Activated T-helper 1 cell treated with anti-CD3 and anti-CD28 coated beads, Interleukin-12 subunit alpha, Interleukin-12 subunit beta, Interleukin-2, Interleukin-4 antibody, amounts not matched to agents 30 ng/mL and 10 ng/mL and 1 ng/mL, durations not matched to agents 14 hours and 24 hours and 36 hours (primary cell): ENCODE measurements at regions of chr22 and their contacts with region 1.

Region 1: GRCh38 chr22:39943337-39943736 is 16.9 kb upstream of the TMA7B start:
- DNase-seq: no peak
- H3K4me3 Mint-ChIP-seq: peak overlapping the region; percentile 42
- H3K27ac Mint-ChIP-seq: peak overlapping the region; percentile 82
- H3K4me1 Mint-ChIP-seq: peaks cover 76% of the 10 kb centered on the region
- H3K27me3 Mint-ChIP-seq: no peaks in the 10 kb centered on the region

Region 2: DNA sequence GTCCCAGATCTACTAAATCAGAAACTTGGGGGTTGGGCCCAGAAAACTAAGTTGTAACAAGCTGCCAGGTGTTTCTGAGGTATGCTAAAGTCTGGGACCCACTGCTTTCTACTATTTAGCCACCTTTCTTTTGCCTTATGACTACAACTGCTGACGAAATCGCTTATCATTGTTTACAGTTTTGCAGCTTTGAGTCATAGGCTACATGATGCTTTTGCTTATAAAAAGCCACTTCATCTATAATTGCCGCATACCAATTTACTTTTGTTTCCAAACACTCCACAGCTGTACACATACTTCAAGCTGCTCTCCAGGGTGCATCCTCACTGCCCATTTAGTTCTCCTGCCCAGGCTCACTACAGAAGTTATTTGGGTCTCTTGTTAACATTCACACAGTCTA is 194.5 kb before region 1 on chr22:
- intact Hi-C with region 1: loop called (anchors 5 kb)
- DNase-seq: no peak
- H3K4me3 Mint-ChIP-seq: no peak overlapping the region
- H3K27ac Mint-ChIP-seq: no peak overlapping the region
- H3K4me1 Mint-ChIP-seq: peaks cover 50% of the 10 kb centered on the region
- H3K27me3 Mint-ChIP-seq: peaks cover 2% of the 10 kb centered on the region

Region 3: DNA sequence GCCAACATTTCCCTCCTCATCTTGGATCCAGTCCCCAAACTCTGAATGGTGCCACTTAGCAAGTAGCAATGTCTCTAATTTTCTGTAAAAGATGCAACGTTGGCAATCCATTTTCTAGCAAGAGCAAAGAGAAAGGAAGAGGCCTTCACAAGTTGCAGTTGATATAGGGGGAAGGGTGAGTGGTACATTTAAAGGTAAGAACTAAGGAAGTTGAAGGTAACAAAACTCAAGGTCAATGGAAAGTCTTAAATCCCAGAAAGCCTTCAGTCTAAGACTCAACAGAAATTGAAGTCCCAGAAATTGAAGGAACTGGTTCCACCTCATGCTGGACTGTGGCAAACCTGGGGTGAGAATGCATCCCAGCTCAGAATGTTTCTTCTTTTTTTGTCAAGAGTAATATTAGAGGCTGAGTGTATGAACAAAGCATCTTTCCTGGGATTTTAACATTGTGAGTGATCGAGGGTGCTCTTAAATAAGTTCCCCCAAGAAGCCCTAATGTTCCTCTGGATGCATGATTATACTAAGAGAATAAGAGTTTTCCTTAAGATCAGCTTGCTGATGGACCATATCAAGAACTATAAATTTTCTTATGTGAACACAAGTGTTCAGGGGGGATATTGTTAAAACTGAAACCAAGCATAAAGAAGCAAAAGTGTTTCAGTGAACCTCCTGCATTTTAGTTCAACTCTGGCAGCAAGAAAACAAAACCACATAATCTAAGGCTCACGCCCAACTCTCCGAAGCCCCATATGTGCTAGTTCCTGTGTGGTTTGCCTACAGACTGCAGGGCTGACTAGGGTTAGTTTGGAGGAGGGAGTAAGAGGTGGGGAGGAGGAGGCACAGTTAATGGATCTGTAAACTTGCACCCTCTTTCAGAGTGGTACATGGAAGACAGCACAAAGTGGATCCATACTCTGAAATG is 42.8 kb before region 1 on chr22 and contains the start of gene GRAP2:
- intact Hi-C with region 1: no loop called
- DNase-seq: peak; percentile 77
- H3K4me3 Mint-ChIP-seq: peak within 1 kb of the TSS; percentile 93
- H3K27ac Mint-ChIP-seq: peak within 1 kb of the TSS; percentile 95
- H3K4me1 Mint-ChIP-seq: peaks cover 47% of the 10 kb centered on the region
- H3K27me3 Mint-ChIP-seq: no peaks in the 10 kb centered on the region
- total RNA-seq, gene GRAP2: 30.5 and 31.3 TPM in 2 replicates

Region 4: DNA sequence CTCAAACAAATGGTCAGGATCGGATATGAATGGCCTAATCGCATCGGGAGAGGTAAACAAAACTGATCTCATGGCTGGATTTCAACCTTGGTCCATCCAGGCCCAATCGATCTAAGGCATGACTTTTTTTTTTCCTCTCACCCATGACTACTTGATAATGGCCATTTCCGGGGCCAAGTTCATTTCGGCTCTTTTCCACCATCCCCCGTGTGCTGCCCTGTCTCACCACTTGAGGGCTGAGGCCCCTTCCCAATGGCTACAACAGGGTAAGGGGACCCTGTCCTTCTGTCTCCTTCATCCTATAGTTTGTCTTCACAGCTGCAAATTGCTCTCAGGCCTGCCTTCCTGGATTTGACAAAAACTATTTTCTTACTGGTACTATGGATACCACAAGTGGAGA is 15.8 kb before region 1 on chr22:
- intact Hi-C with region 1: loop called (anchors 1 kb)
- DNase-seq: no peak
- H3K4me3 Mint-ChIP-seq: no peak overlapping the region
- H3K27ac Mint-ChIP-seq: no peak overlapping the region
- H3K4me1 Mint-ChIP-seq: peaks cover 37% of the 10 kb centered on the region
- H3K27me3 Mint-ChIP-seq: no peaks in the 10 kb centered on the region

Region 5: DNA sequence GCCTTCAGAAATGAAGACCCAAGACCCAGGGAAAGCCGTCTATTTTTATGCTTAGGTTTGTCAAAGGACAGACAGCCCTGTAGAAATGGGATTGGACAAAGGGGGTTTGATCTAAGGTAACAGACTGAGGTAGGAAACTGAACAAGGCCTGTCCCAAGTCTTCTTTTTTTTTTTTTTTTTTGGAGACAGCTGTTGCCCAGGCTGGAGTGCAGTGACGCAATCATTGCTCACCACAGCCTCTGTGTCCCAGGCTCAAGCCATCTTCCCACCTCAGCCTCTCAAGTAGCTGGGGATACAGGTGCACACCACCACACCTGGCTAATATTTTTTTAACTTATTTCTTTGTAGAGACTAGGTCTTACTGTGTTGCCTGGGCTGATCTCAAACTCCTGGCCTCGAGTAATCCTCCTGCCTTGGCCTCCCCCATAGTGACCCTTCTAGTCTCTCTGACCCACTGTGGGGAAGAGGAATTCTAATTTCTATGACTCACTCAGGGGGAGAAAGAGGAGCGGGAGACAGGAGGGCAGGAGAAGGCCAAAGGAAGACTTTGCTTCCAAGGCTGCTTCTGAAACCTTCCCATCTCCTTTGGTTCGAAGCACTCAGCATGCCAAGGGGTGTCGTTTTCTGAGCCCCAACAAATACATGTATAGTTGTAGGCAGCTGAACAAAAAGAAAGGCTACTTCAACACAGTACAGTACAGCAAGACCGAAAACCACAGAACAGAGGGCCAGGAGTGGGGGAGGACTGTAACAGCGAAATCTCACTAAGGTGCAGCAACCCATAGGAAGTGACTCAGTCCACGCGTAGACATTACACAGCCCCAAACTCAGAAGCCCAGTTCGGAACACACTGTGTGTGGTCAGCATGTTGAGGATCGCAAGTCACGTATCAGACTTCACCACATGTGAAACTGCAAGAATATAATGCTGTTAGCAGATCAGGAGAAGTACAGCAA is 17.7 kb after region 1 on chr22:
- intact Hi-C with region 1: loop called (anchors 2 kb)
- DNase-seq: peak; percentile 71
- H3K4me3 Mint-ChIP-seq: peak overlapping the region; percentile 73
- H3K27ac Mint-ChIP-seq: peak overlapping the region; percentile 92
- H3K4me1 Mint-ChIP-seq: peaks cover 54% of the 10 kb centered on the region
- H3K27me3 Mint-ChIP-seq: no peaks in the 10 kb centered on the region